ENCODE measurements at regions of chr6 and their contacts with region 1.

Region 1: DNA sequence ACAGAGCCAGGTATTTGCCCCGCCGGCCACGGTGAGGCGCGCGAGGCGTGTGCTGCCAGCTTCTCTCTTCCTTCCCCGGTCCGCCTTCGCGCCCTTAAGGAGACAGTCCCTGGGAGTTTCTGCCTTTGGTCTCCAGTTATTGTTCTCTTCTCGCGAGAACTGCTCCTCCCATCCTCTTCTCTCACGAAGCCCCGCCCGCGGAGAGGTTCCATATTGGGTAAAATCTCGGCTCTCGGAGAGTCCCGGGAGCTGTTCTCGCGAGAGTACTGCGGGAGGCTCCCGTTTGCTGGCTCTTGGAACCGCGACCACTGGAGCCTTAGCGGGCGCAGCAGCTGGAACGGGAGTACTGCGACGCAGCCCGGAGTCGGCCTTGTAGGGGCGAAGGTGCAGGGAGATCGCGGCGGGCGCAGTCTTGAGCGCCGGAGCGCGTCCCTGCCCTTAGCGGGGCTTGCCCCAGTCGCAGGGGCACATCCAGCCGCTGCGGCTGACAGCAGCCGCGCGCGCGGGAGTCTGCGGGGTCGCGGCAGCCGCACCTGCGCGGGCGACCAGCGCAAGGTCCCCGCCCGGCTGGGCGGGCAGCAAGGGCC is at the start of gene MAPK14:
- DNase-seq: peak; percentile 99
- H3K4me3 ChIP-seq: peak within 1 kb of the TSS; percentile 100
- H3K27ac ChIP-seq: peak within 1 kb of the TSS; percentile 63
- H3K27me3 ChIP-seq: no peaks in the 10 kb centered on the region
- CTCF ChIP-seq: peak; percentile 89
- polyA plus RNA-seq, gene MAPK14: 50.2 and 55.7 TPM in 2 replicates

Region 2: DNA sequence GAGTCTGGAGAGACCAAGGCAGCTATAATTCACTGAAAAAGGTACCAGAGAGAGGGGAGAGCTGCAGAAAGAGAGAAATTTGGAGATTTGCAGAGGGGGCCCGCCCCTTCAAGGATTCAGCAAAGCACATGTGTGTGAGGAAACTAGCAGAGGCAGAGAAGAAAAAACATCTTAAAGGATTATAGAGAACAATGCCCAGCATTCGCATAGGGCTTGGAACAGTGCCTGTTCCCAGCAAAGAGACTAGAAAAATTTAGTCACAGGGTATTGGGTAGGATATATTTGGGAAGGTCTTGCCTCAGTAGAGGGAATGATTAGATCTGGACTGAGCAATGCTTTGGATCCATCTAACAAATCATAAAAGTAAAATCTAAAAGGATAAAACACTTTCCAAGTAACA is 150.7 kb before region 1 on chr6:
- CTCF ChIA-PET with region 1: no interaction called
- POLR2A ChIA-PET with region 1: interaction called, 10 read pairs
- DNase-seq: no peak
- H3K4me3 ChIP-seq: no peak overlapping the region
- H3K27ac ChIP-seq: no peak overlapping the region
- H3K27me3 ChIP-seq: no peaks in the 10 kb centered on the region
- CTCF ChIP-seq: no peak

Region 3: DNA sequence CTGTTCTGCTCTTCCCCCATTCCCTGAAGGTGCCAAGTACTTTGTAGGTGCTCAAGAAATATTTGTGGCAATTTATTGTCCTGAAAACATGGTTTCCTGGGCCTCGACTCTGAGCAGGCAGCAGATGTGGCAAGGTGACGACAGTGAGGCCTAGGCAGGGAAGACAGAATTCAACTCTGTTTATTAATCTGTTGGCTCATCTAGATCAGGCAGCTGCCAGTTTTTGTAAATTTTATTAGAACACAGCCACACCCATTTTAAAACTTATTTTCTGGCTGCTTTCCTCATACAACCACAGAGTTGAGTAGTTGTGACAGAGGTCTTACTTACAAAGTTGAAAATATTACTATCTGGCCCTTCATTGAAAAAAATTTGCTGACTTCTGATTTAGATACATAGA is 24.5 kb after region 1 on chr6:
- CTCF ChIA-PET with region 1: interaction called, 10 read pairs
- POLR2A ChIA-PET with region 1: interaction called, 6 read pairs
- DNase-seq: no peak
- H3K4me3 ChIP-seq: no peak overlapping the region
- H3K27ac ChIP-seq: no peak overlapping the region
- H3K27me3 ChIP-seq: no peaks in the 10 kb centered on the region
- CTCF ChIP-seq: no peak

Region 4: GRCh38 chr6:36139429-36139828 is 111.8 kb after region 1 on chr6:
- CTCF ChIA-PET with region 1: no interaction called
- POLR2A ChIA-PET with region 1: no interaction called
- DNase-seq: no peak
- H3K4me3 ChIP-seq: no peak overlapping the region
- H3K27ac ChIP-seq: no peak overlapping the region
- H3K27me3 ChIP-seq: no peaks in the 10 kb centered on the region
- CTCF ChIP-seq: peak; percentile 19; the same call in 1 of the 2 replicates

Region 5: DNA sequence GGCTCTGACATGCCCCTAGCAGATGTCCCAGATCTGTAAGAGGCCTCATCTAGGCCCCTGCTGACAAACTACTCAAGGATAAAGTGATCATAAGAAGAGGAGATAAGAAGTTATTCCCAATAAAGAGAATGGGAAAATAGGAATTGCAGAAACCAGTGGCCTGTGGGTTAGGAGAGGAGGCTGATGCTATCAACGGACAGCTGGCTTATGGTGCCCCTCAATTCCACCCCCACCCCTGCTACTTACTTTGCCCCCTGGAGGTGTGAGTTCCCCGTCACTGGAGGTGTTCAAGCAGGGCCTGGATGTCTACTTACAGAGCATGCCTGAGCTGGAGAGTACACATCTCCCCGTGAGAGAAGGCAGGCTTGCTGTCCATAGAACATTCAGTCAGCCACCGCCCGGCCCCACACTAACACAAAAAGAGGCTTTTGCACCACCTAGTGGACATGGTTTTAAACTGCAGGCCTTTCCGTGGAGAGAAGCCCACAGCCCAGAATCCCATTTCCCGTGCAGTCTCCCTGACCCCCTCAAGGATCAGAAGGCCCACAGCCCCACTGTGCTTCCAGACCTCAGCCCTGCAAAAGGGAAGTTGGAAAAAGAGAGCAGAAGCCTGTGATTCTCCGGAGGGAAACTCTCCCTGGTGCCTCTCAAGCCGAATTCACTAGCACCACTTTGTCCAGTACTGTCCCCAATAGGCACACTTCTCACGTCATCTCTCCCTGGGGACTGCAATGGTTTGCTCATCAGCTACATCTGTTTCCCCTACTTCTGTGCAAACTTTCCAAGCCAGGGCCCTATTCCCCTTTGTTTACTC is 332.9 kb after region 1 on chr6:
- CTCF ChIA-PET with region 1: interaction called, 3 read pairs
- POLR2A ChIA-PET with region 1: interaction called, 11 read pairs
- DNase-seq: no peak
- H3K4me3 ChIP-seq: no peak overlapping the region
- H3K27ac ChIP-seq: no peak overlapping the region
- H3K27me3 ChIP-seq: peaks cover 12% of the 10 kb centered on the region
- CTCF ChIP-seq: peak; percentile 78

Measured in AG04450 (cell line).